CD8-positive, alpha-beta memory T cell (primary cell): ENCODE measurements at regions of chr9 and their contacts with region 1.

Region 1: DNA sequence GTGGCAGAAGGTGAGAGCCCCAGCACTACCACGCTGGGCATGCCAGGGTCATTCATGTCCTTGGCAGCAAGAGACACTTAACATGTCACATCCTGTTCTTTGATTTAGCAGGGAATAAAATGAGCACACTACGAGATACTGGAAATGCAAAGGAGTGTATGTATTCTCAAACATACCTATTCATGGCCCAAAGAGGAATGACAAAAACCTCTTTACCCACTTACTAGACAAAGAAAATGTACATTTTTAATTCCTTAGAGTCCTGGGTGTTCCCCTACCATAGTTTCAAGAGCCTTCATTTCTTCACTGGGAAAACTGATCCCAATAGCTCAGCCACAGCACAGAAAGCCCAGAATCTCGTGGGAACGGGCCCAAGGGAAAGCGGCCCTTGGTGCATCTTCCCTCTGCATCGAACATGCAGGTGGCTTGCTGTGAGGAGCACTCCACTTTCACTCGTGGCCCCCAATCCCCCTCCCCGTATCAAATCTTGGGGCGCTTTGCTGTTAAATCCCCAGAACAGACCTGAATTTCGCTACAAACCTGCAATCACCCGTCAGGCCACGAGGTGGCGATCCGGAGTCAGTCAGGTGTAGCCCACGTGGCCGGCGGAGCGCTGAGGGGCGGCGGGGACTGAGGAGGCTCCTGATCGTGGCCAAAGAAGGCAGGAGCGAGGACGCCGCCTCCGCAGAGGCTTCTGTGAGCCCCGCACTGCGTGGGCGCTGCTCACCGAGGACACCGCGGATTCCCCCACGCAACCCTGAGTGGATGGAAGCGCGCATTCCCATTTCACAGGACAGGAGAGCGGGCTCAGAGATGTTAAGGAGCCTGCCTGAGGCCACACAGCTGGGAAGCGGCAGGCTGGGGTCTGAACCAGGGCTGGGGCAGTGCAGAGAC is 91.4 kb downstream of the LMX1B start:
- DNase-seq: peak; percentile 74 to 88 (median 81)
- H3K4me3 ChIP-seq: no peak overlapping the region
- H3K4me3 Mint-ChIP-seq: peak overlapping the region in 6 of 7 donors; percentile 0 to 69 (median 23)
- H3K27ac ChIP-seq: no peak overlapping the region
- H3K27ac Mint-ChIP-seq: peak overlapping the region in 3 of 8 donors; percentile 7 to 73 (median 47)
- H3K4me1 ChIP-seq: peaks cover 14% of the 10 kb centered on the region
- H3K4me1 Mint-ChIP-seq: peaks cover 13 to 23% (median 16%) of the 10 kb centered on the region in 3 donors
- H3K27me3 ChIP-seq: peaks cover 17% of the 10 kb centered on the region
- H3K27me3 Mint-ChIP-seq: peaks cover 19 to 49% of the 10 kb centered on the region in 2 donors

Region 2: DNA sequence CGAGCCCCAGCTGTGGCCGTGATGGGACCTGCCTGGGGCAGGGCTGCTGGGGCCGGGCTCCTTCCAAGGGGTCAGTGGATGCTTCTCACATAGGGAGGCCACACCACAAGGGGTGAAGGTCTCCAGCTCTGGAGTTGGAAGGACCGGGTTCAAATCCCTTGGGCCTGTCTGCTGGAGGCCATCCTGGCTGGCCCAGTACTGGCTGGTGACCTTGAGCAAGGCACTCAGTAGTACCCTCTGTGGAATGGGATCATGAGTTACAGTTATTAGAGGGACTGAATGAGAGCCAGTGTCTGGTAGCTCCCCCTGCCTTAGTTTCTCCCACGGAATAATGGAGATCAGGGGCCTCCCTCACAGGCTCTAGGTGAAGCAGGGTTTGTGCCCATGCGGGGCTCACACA is 33.1 kb before region 1 on chr9:
- CTCF ChIA-PET with region 1: no interaction called
- POLR2A ChIA-PET with region 1: no interaction called
- DNase-seq: no peak
- H3K4me3 ChIP-seq: no peak overlapping the region
- H3K4me3 Mint-ChIP-seq: no peak overlapping the region
- H3K27ac ChIP-seq: no peak overlapping the region
- H3K27ac Mint-ChIP-seq: no peak overlapping the region
- H3K4me1 ChIP-seq: no peaks in the 10 kb centered on the region
- H3K4me1 Mint-ChIP-seq: peaks cover 6 to 12% (median 6%) of the 10 kb centered on the region in 3 donors
- H3K27me3 ChIP-seq: peaks cover 15% of the 10 kb centered on the region
- H3K27me3 Mint-ChIP-seq: peaks cover 35 to 40% of the 10 kb centered on the region in 2 donors

Region 3: GRCh38 chr9:126715382-126715781 is 10.3 kb after region 1 on chr9:
- CTCF ChIA-PET with region 1: interaction called, 39 read pairs
- POLR2A ChIA-PET with region 1: no interaction called
- DNase-seq: no peak
- H3K4me3 ChIP-seq: no peak overlapping the region
- H3K4me3 Mint-ChIP-seq: peak overlapping the region in 1 of 7 donors; percentile 52
- H3K27ac ChIP-seq: no peak overlapping the region
- H3K27ac Mint-ChIP-seq: peak overlapping the region in 1 of 8 donors; percentile 73
- H3K4me1 ChIP-seq: peaks cover 19% of the 10 kb centered on the region
- H3K4me1 Mint-ChIP-seq: peaks cover 16 to 24% (median 18%) of the 10 kb centered on the region in 3 donors
- H3K27me3 ChIP-seq: no peaks in the 10 kb centered on the region
- H3K27me3 Mint-ChIP-seq: peaks cover 3 to 7% of the 10 kb centered on the region in 2 donors

Region 4: DNA sequence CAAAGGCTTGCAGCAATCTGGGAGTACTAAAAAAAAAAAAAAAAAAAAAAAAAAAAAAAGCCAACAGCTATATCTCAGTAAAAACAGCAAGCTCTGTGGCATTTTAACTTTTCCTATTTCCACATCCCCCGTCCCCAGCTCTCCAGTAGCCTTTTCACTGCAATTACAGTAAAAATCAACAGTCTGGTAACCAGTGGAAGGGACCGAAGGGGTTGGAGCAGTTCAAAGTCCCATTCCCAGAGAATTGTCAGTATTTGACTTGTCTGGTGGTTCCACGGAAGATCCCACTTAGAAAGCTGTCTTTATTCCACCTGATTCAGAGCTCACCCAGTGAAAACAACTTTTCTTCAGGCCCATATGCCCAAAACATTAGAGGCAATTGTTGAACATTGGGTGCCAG is 27.9 kb after region 1 on chr9:
- CTCF ChIA-PET with region 1: interaction called, 22 read pairs
- POLR2A ChIA-PET with region 1: no interaction called
- DNase-seq: no peak
- H3K4me3 ChIP-seq: no peak overlapping the region
- H3K4me3 Mint-ChIP-seq: no peak overlapping the region
- H3K27ac ChIP-seq: no peak overlapping the region
- H3K27ac Mint-ChIP-seq: no peak overlapping the region
- H3K4me1 ChIP-seq: no peaks in the 10 kb centered on the region
- H3K4me1 Mint-ChIP-seq: no peaks in the 10 kb centered on the region
- H3K27me3 ChIP-seq: no peaks in the 10 kb centered on the region
- H3K27me3 Mint-ChIP-seq: peaks cover 6 to 13% of the 10 kb centered on the region in 2 donors

Region 5: GRCh38 chr9:126752376-126752775 is 47.3 kb after region 1 on chr9:
- CTCF ChIA-PET with region 1: interaction called, 39 read pairs
- POLR2A ChIA-PET with region 1: no interaction called
- DNase-seq: no peak
- H3K4me3 ChIP-seq: no peak overlapping the region
- H3K4me3 Mint-ChIP-seq: no peak overlapping the region
- H3K27ac ChIP-seq: no peak overlapping the region
- H3K27ac Mint-ChIP-seq: no peak overlapping the region
- H3K4me1 ChIP-seq: peaks cover 6% of the 10 kb centered on the region
- H3K4me1 Mint-ChIP-seq: peaks cover 9 to 15% (median 12%) of the 10 kb centered on the region in 3 donors
- H3K27me3 ChIP-seq: no peaks in the 10 kb centered on the region
- H3K27me3 Mint-ChIP-seq: peaks cover 4 to 12% of the 10 kb centered on the region in 2 donors

Region 6: GRCh38 chr9:126773004-126773607 is 68.0 kb after region 1 on chr9:
- CTCF ChIA-PET with region 1: interaction called, 297 read pairs
- POLR2A ChIA-PET with region 1: no interaction called
- DNase-seq: no peak
- H3K4me3 ChIP-seq: no peak overlapping the region
- H3K4me3 Mint-ChIP-seq: no peak overlapping the region
- H3K27ac ChIP-seq: no peak overlapping the region
- H3K27ac Mint-ChIP-seq: peak overlapping the region in 1 of 8 donors; percentile 14
- H3K4me1 ChIP-seq: no peaks in the 10 kb centered on the region
- H3K4me1 Mint-ChIP-seq: no peaks in the 10 kb centered on the region
- H3K27me3 ChIP-seq: no peaks in the 10 kb centered on the region
- H3K27me3 Mint-ChIP-seq: peaks cover 12 to 20% of the 10 kb centered on the region in 2 donors

Region 7: DNA sequence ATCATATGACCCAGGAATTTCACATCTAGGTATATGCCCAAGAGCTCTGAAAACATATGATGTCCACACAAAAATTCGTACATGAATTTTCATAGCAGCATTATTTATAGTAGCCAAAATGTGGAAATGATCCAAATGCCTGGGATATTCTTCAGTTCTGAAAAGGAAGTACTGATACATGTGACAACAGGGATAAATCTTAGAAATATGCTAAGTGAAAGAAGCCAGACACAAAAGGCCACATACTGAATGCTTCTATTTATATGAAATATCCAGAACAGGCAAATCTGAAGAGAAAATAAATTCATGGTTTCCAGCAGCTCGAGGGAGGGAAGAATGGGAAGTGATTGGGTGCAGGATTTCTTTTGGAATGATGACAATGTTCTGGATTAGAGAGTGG is 82.9 kb after region 1 on chr9:
- CTCF ChIA-PET with region 1: interaction called, 297 read pairs
- POLR2A ChIA-PET with region 1: no interaction called
- DNase-seq: no peak
- H3K4me3 ChIP-seq: no peak overlapping the region
- H3K4me3 Mint-ChIP-seq: no peak overlapping the region
- H3K27ac ChIP-seq: no peak overlapping the region
- H3K27ac Mint-ChIP-seq: no peak overlapping the region
- H3K4me1 ChIP-seq: no peaks in the 10 kb centered on the region
- H3K4me1 Mint-ChIP-seq: no peaks in the 10 kb centered on the region
- H3K27me3 ChIP-seq: peaks cover 9% of the 10 kb centered on the region
- H3K27me3 Mint-ChIP-seq: peaks cover 30 to 59% of the 10 kb centered on the region in 2 donors

Region 8: GRCh38 chr9:126844085-126844484 is 139.0 kb after region 1 on chr9:
- CTCF ChIA-PET with region 1: no interaction called
- POLR2A ChIA-PET with region 1: no interaction called
- DNase-seq: no peak
- H3K4me3 ChIP-seq: no peak overlapping the region
- H3K4me3 Mint-ChIP-seq: no peak overlapping the region
- H3K27ac ChIP-seq: no peak overlapping the region
- H3K27ac Mint-ChIP-seq: peak overlapping the region in 3 of 8 donors; percentile 15 to 74 (median 32)
- H3K4me1 ChIP-seq: no peaks in the 10 kb centered on the region
- H3K4me1 Mint-ChIP-seq: peaks cover under 1 to 8% (median 3%) of the 10 kb centered on the region in 3 donors
- H3K27me3 ChIP-seq: no peaks in the 10 kb centered on the region
- H3K27me3 Mint-ChIP-seq: peaks cover 0 to 5% of the 10 kb centered on the region in 2 donors